Mammary epithelial cell (primary cell): ENCODE measurements at regions of chr17 and their contacts with region 1.

Region 1: GRCh38 chr17:34474706-34475105 is 104.7 kb upstream of the TMEM132E start:
- DNase-seq: no peak
- H3K4me3 ChIP-seq: no peak overlapping the region
- H3K27ac ChIP-seq: no peak overlapping the region
- H3K4me1 ChIP-seq: no peaks in the 10 kb centered on the region
- H3K27me3 ChIP-seq: no peaks in the 10 kb centered on the region
- CTCF ChIP-seq: no peak

Region 2: DNA sequence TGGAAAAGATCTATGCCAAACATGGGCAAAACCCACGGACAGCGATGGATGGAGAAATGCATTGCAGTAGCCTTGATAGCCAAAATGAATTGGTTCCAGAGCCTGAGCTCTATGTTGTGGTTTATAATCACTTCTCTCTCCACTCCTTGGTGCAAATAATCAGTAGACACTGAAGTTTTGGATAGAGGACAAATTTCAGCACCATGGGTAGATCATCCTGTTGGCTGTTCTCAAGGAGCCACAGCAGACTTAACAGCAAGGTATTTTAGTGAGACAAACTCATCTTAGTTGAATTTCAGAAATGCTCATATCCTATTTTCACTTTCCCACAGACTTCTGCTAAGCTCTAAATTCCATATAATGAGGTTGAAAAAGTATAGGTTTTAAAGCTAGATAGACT is 23.4 kb before region 1 on chr17:
- CTCF ChIA-PET with region 1: no interaction called
- dilution Hi-C with region 1: no loop called
- in situ Hi-C with region 1: no loop called
- intact Hi-C with region 1: no loop called
- DNase-seq: no peak
- H3K4me3 ChIP-seq: no peak overlapping the region
- H3K27ac ChIP-seq: no peak overlapping the region
- H3K4me1 ChIP-seq: no peaks in the 10 kb centered on the region
- H3K27me3 ChIP-seq: peaks cover under 1% of the 10 kb centered on the region
- CTCF ChIP-seq: no peak

Region 3: GRCh38 chr17:34562387-34562786 is 87.7 kb after region 1 on chr17:
- CTCF ChIA-PET with region 1: no interaction called
- dilution Hi-C with region 1: no loop called
- in situ Hi-C with region 1: loop called in 1 of 2 experiments (anchors 25 kb)
- intact Hi-C with region 1: no loop called
- DNase-seq: no peak
- H3K4me3 ChIP-seq: no peak overlapping the region
- H3K27ac ChIP-seq: no peak overlapping the region
- H3K4me1 ChIP-seq: no peaks in the 10 kb centered on the region
- H3K27me3 ChIP-seq: no peaks in the 10 kb centered on the region
- CTCF ChIP-seq: peak; percentile 28 to 32